Naive thymus-derived CD4-positive, alpha-beta T cell (primary cell): ENCODE measurements at regions of chr11 and their contacts with region 1.

Region 1: GRCh38 chr11:121451986-121452608 is at the start of gene SORL1:
- DNase-seq: peak; percentile 58 to 75 (median 72)
- ATAC-seq: peak; percentile 74
- H3K4me3 ChIP-seq: peak within 1 kb of the TSS; percentile 80
- H3K4me3 Mint-ChIP-seq: peak within 1 kb of the TSS; percentile 90 to 99 (median 98)
- H3K27ac ChIP-seq: peak within 1 kb of the TSS; percentile 83
- H3K27ac Mint-ChIP-seq: peak within 1 kb of the TSS; percentile 90 to 100 (median 96)
- H3K4me1 ChIP-seq: peaks cover 50 to 73% of the 10 kb centered on the region in 2 donors
- H3K4me1 Mint-ChIP-seq: peaks cover 69 to 87% (median 81%) of the 10 kb centered on the region in 7 donors
- H3K27me3 ChIP-seq: no peaks in the 10 kb centered on the region
- H3K27me3 Mint-ChIP-seq: no peaks in the 10 kb centered on the region
- total RNA-seq, gene SORL1: 179 to 555 (median 375) TPM

Region 2: GRCh38 chr11:119681361-119681910 is 1770.7 kb before region 1 on chr11:
- CTCF ChIA-PET with region 1: no interaction called
- POLR2A ChIA-PET with region 1: no interaction called
- intact Hi-C with region 1: no loop called
- DNase-seq: no peak
- ATAC-seq: no peak
- H3K4me3 ChIP-seq: no peak overlapping the region
- H3K4me3 Mint-ChIP-seq: no peak overlapping the region
- H3K27ac ChIP-seq: no peak overlapping the region
- H3K27ac Mint-ChIP-seq: no peak overlapping the region
- H3K4me1 ChIP-seq: peaks cover 0 to 5% of the 10 kb centered on the region in 2 donors
- H3K4me1 Mint-ChIP-seq: peaks cover 0 to 11% (median 3%) of the 10 kb centered on the region in 7 donors
- H3K27me3 ChIP-seq: no peaks in the 10 kb centered on the region
- H3K27me3 Mint-ChIP-seq: peaks cover 0 to 2% (median 0%) of the 10 kb centered on the region in 5 donors

Region 3: GRCh38 chr11:121292495-121293287 is 159.4 kb before region 1 on chr11 and contains the start of gene SC5D:
- CTCF ChIA-PET with region 1: interaction called, 5 read pairs
- POLR2A ChIA-PET with region 1: interaction called, 36 read pairs
- intact Hi-C with region 1: loop called (anchors 1 kb)
- DNase-seq: peak; percentile 94 to 98 (median 96)
- ATAC-seq: peak; percentile 96
- H3K4me3 ChIP-seq: peak within 1 kb of the TSS; percentile 72
- H3K4me3 Mint-ChIP-seq: peak within 1 kb of the TSS; percentile 90 to 100 (median 94)
- H3K27ac ChIP-seq: peak within 1 kb of the TSS; percentile 95
- H3K27ac Mint-ChIP-seq: peak within 1 kb of the TSS; percentile 88 to 100 (median 99)
- H3K4me1 ChIP-seq: peaks cover 6 to 18% of the 10 kb centered on the region in 2 donors
- H3K4me1 Mint-ChIP-seq: peaks cover 35 to 66% (median 58%) of the 10 kb centered on the region in 7 donors
- H3K27me3 ChIP-seq: no peaks in the 10 kb centered on the region
- H3K27me3 Mint-ChIP-seq: peaks cover 0 to 12% (median 0%) of the 10 kb centered on the region in 5 donors
- total RNA-seq, gene SC5D: 21.5 to 48.7 (median 32.8) TPM

Region 4: GRCh38 chr11:121334973-121335710 is 117.0 kb before region 1 on chr11:
- CTCF ChIA-PET with region 1: interaction called, 3 read pairs
- POLR2A ChIA-PET with region 1: interaction called, 19 read pairs
- intact Hi-C with region 1: no loop called
- DNase-seq: no peak
- ATAC-seq: no peak
- H3K4me3 ChIP-seq: no peak overlapping the region
- H3K4me3 Mint-ChIP-seq: peak overlapping the region in 2 of 10 donors; percentile 41 to 52
- H3K27ac ChIP-seq: no peak overlapping the region
- H3K27ac Mint-ChIP-seq: peak overlapping the region in 3 of 9 donors; percentile 3 to 64 (median 36)
- H3K4me1 ChIP-seq: peaks cover 0 to 8% of the 10 kb centered on the region in 2 donors
- H3K4me1 Mint-ChIP-seq: peaks cover 6 to 46% (median 19%) of the 10 kb centered on the region in 7 donors
- H3K27me3 ChIP-seq: no peaks in the 10 kb centered on the region
- H3K27me3 Mint-ChIP-seq: peaks cover 0 to 4% (median 0%) of the 10 kb centered on the region in 5 donors

Region 5: DNA sequence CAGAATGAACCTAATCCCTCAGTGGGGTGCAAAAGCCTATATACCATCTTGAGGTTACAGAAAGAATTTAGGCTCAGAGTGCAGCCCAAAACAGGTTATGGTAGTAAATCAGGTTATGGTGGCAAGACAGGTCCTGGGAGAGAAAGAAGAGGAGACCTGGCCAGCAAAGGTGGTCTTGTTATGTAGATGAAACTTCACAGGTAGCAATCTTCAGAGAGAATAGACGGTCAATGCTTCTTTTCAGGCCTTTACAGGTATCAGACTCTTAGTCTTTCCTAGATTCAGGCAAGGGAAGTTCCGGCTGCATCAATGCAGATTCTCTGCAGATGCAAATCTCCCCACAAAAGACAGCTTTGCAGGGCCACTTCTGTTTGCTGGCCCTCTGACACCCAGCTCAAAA is 45.8 kb before region 1 on chr11:
- CTCF ChIA-PET with region 1: no interaction called
- POLR2A ChIA-PET with region 1: interaction called, 15 read pairs
- intact Hi-C with region 1: no loop called
- DNase-seq: no peak
- ATAC-seq: no peak
- H3K4me3 ChIP-seq: no peak overlapping the region
- H3K4me3 Mint-ChIP-seq: no peak overlapping the region
- H3K27ac ChIP-seq: no peak overlapping the region
- H3K27ac Mint-ChIP-seq: peak overlapping the region in 6 of 9 donors; percentile 5 to 49 (median 36)
- H3K4me1 ChIP-seq: no peaks in the 10 kb centered on the region
- H3K4me1 Mint-ChIP-seq: peaks cover 0 to 14% (median 7%) of the 10 kb centered on the region in 7 donors
- H3K27me3 ChIP-seq: no peaks in the 10 kb centered on the region
- H3K27me3 Mint-ChIP-seq: no peaks in the 10 kb centered on the region

Region 6: DNA sequence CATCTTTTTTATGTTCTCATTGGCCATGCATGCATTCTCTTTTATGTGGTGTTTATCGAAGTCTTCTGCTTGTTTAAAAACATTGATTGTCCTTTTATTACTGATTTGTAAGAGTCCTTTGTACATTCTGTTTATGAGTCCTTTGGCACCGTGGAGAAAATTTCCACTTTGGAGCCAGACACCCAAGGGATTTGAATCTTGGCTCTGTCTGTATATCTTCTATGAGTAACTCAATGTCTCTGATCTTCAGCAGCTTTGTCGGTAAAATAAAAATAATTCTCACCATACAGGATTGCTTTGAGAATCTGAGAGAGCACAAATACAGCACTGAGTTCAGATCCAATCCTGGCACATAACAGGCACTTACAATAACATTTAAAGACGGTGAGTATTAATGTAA is 12.8 kb before region 1 on chr11:
- CTCF ChIA-PET with region 1: interaction called, 6 read pairs
- POLR2A ChIA-PET with region 1: interaction called, 321 read pairs
- intact Hi-C with region 1: loop called in 1 of 2 experiments (anchors 1 kb)
- DNase-seq: no peak
- ATAC-seq: no peak
- H3K4me3 ChIP-seq: no peak overlapping the region
- H3K4me3 Mint-ChIP-seq: no peak overlapping the region
- H3K27ac ChIP-seq: no peak overlapping the region
- H3K27ac Mint-ChIP-seq: peak overlapping the region in 3 of 9 donors; percentile 1 to 78 (median 29)
- H3K4me1 ChIP-seq: peaks cover 0 to 29% of the 10 kb centered on the region in 2 donors
- H3K4me1 Mint-ChIP-seq: peaks cover 37 to 87% (median 64%) of the 10 kb centered on the region in 7 donors
- H3K27me3 ChIP-seq: no peaks in the 10 kb centered on the region
- H3K27me3 Mint-ChIP-seq: no peaks in the 10 kb centered on the region

Region 7: DNA sequence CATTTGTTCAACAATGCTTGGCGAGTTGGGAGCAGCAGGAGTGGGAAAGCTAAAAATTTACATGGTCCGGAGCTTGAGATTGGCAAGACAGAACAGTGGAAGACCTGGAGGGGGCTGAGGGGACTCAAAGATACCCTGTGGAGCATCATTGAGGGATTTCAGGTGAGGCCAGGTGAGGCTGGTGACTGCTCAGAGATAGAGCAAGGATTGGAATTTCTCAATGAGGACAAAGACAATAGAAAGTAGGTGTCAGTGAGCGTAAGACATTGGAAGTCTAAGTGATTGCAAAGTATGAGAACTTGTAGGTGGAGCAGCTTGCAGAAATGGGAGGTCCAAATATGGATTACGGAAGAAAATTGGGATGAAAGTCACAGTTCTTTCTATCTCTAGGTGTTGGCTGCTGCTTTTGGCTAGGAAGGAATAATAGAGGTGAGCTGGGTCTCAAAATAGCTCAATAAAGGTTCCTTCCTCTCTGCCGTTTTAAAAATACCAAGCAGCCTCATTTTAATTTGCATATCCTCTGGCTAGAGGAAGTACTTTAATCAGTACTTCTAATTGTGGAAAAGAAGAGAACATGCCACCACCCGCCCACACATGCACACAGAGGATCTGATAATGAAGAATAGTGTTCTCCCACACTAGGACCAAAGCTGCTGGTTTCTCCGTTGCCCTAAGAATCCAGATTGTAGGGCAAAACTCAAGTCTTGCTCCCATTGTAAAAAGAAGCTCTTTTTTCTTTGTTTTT is 42.4 kb after region 1 on chr11:
- CTCF ChIA-PET with region 1: interaction called, 3 read pairs
- POLR2A ChIA-PET with region 1: interaction called, 17 read pairs
- intact Hi-C with region 1: loop called in 1 of 2 experiments (anchors 1 kb)
- DNase-seq: peak in 7 of 9 donors; percentile 11 to 36 (median 26)
- ATAC-seq: peak; percentile 72
- H3K4me3 ChIP-seq: no peak overlapping the region
- H3K4me3 Mint-ChIP-seq: peak overlapping the region; percentile 51 to 83 (median 70)
- H3K27ac ChIP-seq: peak overlapping the region; percentile 53
- H3K27ac Mint-ChIP-seq: peak overlapping the region; percentile 44 to 89 (median 79)
- H3K4me1 ChIP-seq: peaks cover 15 to 31% of the 10 kb centered on the region in 2 donors
- H3K4me1 Mint-ChIP-seq: peaks cover 34 to 84% (median 72%) of the 10 kb centered on the region in 7 donors
- H3K27me3 ChIP-seq: no peaks in the 10 kb centered on the region
- H3K27me3 Mint-ChIP-seq: no peaks in the 10 kb centered on the region

Region 8: GRCh38 chr11:121762820-121763219 is 310.7 kb after region 1 on chr11:
- CTCF ChIA-PET with region 1: no interaction called
- POLR2A ChIA-PET with region 1: no interaction called
- intact Hi-C with region 1: no loop called
- DNase-seq: no peak
- ATAC-seq: no peak
- H3K4me3 ChIP-seq: no peak overlapping the region
- H3K4me3 Mint-ChIP-seq: no peak overlapping the region
- H3K27ac ChIP-seq: no peak overlapping the region
- H3K27ac Mint-ChIP-seq: no peak overlapping the region
- H3K4me1 ChIP-seq: no peaks in the 10 kb centered on the region
- H3K4me1 Mint-ChIP-seq: no peaks in the 10 kb centered on the region
- H3K27me3 ChIP-seq: no peaks in the 10 kb centered on the region
- H3K27me3 Mint-ChIP-seq: peaks cover 0 to 13% (median 11%) of the 10 kb centered on the region in 5 donors